Uterus (tissue), 4 donors: ENCODE measurements at regions of chr20 and their contacts with region 1.

Region 1: GRCh38 chr20:32521780-32522525 is 63.2 kb downstream of the NOL4L start:
- DNase-seq: peak; percentile 47 to 69
- H3K4me3 ChIP-seq: no peak overlapping the region
- H3K27ac ChIP-seq: no peak overlapping the region
- H3K4me1 ChIP-seq: no peaks in the 10 kb centered on the region
- H3K27me3 ChIP-seq: no peaks in the 10 kb centered on the region
- CTCF ChIP-seq: peak; percentile 75 to 92 (median 88)
- POLR2A ChIP-seq: no peak

Region 2: GRCh38 chr20:32652739-32653526 is 131.0 kb after region 1 on chr20:
- intact Hi-C with region 1: loop called (anchors 5 kb)
- DNase-seq: peak; percentile 68 to 80
- H3K4me3 ChIP-seq: no peak overlapping the region
- H3K27ac ChIP-seq: no peak overlapping the region
- H3K4me1 ChIP-seq: no peaks in the 10 kb centered on the region
- H3K27me3 ChIP-seq: no peaks in the 10 kb centered on the region
- CTCF ChIP-seq: peak; percentile 87 to 98 (median 95)
- POLR2A ChIP-seq: no peak